Activated T-helper 1 cell treated with anti-CD3 and anti-CD28 coated beads, Interleukin-12 subunit alpha, Interleukin-12 subunit beta, Interleukin-2, Interleukin-4 antibody, amounts not matched to agents 30 ng/mL and 10 ng/mL and 1 ng/mL, durations not matched to agents 14 hours and 24 hours and 36 hours (primary cell): ENCODE measurements at regions of chr17 and their contacts with region 1.

Region 1: DNA sequence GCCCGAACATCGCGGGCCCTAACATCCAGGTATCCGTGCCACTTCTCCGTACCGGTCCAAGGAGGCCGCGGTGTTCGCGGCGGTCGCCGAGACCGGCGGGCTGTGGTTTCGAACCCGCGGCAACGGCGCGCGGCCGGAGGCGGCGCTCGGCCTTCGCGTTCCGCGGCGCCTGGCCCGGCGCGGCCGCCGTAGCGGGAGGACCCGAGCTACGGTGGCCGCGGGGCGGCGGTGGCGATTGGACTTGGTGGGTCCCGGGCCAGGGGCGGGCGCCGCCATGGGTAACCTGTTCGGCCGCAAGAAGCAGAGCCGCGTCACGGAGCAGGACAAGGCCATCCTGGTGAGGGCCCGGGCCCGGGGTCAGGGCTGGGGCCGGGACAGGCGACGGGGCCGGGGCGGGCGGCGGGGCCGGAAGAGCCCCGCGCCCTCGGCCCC is at the start of gene CHMP6:
- DNase-seq: peak; percentile 67
- H3K4me3 Mint-ChIP-seq: peak within 1 kb of the TSS; percentile 83
- H3K27ac Mint-ChIP-seq: peak within 1 kb of the TSS; percentile 68
- H3K4me1 Mint-ChIP-seq: peaks cover 17% of the 10 kb centered on the region
- H3K27me3 Mint-ChIP-seq: peaks cover 5% of the 10 kb centered on the region
- total RNA-seq, gene CHMP6: 36.6 and 43.5 TPM in 2 replicates

Region 2: GRCh38 chr17:81018044-81018802 is 26.6 kb after region 1 on chr17:
- intact Hi-C with region 1: loop called (anchors 1 kb)
- DNase-seq: peak; percentile 30
- H3K4me3 Mint-ChIP-seq: peak overlapping the region; percentile 82
- H3K27ac Mint-ChIP-seq: peak overlapping the region; percentile 97
- H3K4me1 Mint-ChIP-seq: peaks cover 31% of the 10 kb centered on the region
- H3K27me3 Mint-ChIP-seq: no peaks in the 10 kb centered on the region

Region 3: DNA sequence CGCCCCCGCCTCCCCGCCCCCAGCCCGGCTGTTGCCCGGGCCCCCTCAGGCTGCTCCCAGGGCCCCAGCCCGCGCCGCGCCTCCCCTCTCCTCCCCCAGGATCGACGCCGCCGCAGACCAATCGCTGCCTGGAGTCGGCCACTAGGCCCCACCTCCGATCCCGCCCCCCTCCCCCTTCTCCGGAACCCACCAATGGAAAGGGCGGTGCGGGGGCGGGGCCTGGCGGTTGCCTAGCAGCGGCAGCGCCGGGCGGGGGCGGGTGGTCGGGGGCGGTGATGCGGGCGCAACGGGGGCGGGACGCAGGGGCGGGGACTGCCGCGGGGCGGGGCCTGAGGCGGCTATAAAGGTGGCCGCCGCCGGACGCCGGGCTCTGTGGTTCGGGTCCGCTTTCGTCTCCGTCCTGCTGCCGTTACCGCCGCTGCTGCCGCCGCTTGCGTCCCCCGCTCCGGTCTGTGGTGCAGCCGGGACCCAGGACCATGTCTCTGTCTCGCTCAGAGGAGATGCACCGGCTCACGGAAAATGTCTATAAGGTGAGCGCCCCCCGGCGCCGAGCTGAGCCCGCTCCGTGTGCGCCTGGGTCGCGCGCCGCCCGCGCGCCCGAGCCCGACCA is 43.2 kb after region 1 on chr17 and contains the start of gene BAIAP2:
- intact Hi-C with region 1: loop called (anchors 5 kb)
- DNase-seq: peak; percentile 89
- H3K4me3 Mint-ChIP-seq: peak within 1 kb of the TSS; percentile 83
- H3K27ac Mint-ChIP-seq: peak within 1 kb of the TSS; percentile 84
- H3K4me1 Mint-ChIP-seq: peaks cover 17% of the 10 kb centered on the region
- H3K27me3 Mint-ChIP-seq: peaks cover 34% of the 10 kb centered on the region
- total RNA-seq, gene BAIAP2: 4.3 and 5.8 TPM in 2 replicates

Region 4: DNA sequence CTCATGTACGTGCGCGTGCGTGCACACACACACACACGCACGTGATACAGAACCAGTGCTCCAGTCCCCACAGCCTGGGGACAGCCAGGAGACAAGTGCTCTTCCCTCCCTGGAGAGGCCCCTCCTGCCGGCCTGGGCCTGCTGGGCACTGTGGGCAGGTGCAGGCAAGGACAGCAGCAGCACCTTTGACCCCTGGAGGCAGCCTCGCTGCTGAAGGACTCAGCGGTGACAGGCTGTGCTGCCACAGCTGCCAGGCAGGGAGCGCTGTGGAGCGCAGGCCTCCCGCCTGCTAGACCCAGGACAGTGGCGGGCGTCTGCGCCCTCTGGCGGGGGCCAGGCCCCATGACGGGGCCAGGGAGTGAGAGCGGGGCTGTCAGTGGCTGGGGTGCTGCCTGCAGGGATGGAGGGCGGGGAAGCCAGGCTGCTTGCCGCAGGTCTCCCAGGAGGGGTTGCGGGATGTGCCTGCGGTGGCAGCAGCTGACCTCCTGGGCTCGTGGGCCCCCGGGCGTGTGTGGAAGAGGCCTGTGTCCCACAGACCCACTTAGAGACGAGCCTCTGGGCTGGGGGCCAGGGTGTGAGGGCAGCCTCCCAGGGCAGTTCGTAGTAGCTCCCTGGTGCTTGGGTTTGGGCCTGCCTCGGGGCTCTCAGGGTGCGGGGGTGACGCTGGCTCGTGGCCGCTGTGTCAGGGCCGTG is 110.1 kb after region 1 on chr17:
- intact Hi-C with region 1: loop called (anchors 1 kb)
- DNase-seq: peak; percentile 86
- H3K4me3 Mint-ChIP-seq: no peak overlapping the region
- H3K27ac Mint-ChIP-seq: no peak overlapping the region
- H3K4me1 Mint-ChIP-seq: peaks cover 2% of the 10 kb centered on the region
- H3K27me3 Mint-ChIP-seq: peaks cover 1% of the 10 kb centered on the region

Region 5: DNA sequence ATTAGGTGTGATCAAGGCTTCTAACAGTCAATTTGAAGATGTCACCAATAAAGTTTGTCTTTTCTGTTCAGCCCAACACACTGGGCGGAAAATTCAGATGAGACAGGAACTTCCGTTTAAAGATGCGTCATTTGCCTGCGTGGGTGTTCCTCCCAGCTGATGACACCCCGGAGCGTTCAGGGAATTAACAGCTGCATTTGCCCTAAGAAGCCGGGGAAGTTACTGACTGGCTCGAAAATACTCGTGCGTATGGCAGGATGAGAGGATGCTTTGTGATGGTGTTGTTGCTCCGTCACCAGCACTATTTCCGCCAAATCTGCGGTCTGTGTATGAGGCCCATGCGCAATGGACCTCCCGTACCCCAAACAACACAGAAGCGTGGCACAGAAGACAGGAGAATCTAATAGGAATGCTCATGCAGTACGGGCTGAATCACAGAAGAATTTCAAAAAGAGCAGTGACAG is 161.7 kb after region 1 on chr17:
- intact Hi-C with region 1: no loop called
- DNase-seq: no peak
- H3K4me3 Mint-ChIP-seq: no peak overlapping the region
- H3K27ac Mint-ChIP-seq: no peak overlapping the region
- H3K4me1 Mint-ChIP-seq: no peaks in the 10 kb centered on the region
- H3K27me3 Mint-ChIP-seq: peaks cover 6% of the 10 kb centered on the region